Esophagus muscularis mucosa (tissue), 4 donors: ENCODE measurements at regions of chr12 and their contacts with region 1.

Region 1: DNA sequence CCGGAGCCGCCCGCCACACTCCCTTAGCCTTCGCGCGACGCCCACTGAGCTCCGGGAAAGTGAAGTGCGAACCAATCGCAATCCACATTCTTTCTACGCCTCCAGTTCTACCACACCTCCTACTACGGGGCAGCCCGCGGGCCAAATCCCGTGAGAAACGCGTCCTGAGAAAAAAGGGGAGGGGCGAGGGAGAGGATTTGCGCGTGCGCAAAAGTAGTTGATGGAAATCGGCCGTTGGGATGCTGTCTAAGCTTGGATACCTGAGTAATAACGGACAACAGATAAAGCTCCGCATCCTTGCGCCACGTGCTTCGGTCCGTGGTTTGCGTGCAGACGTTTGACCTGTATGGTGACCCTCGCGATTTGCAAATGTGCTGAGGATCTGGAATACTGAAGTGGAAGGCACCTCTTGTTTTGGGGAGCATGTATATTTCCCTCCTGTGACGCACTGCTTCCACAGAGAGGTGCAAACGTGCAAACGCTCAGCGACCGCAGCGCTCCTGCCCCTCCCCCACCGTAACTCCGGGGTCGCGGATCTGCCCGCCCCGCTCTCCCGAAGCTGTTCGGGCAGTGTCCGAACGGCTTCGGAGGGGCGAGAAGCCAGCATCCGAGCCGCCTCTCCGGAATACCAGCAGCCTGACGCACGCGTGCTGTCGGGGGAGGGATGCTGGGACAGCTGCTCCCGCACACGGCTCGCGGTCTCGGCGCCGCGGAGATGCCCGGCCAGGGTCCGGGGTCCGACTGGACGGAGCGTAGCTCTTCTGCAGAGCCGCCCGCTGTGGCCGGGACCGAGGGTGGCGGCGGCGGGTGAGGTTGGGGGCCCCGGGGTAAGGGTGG is at the starts of genes FAM216A and GPN3:
- DNase-seq: peak; percentile 99
- H3K4me3 ChIP-seq: peak within 1 kb of the TSS; percentile 77 to 91 (median 82)
- H3K27ac ChIP-seq: peak within 1 kb of the TSS; percentile 94 to 100 (median 96)
- H3K4me1 ChIP-seq: peaks cover 16 to 36% (median 28%) of the 10 kb centered on the region in 4 donors
- H3K27me3 ChIP-seq: no peaks in the 10 kb centered on the region
- CTCF ChIP-seq: peak in 1 of 3 experiments; percentile 42
- EP300 ChIP-seq: no peak
- POLR2A ChIP-seq: peak; percentile 56
- total RNA-seq, gene FAM216A: 6.2 to 10.4 (median 8.0) TPM
- total RNA-seq, gene GPN3: 18.5 to 39.0 (median 25.9) TPM

Region 2: GRCh38 chr12:110501752-110502738 is 33.6 kb after region 1 on chr12 and contains the starts of genes RAD9B and VPS29:
- intact Hi-C with region 1: loop called (anchors 2 kb)
- DNase-seq: peak; percentile 99
- H3K4me3 ChIP-seq: peak within 1 kb of the TSS; percentile 87 to 98 (median 93)
- H3K27ac ChIP-seq: peak within 1 kb of the TSS; percentile 92 to 97 (median 96)
- H3K4me1 ChIP-seq: peaks cover 35 to 46% (median 45%) of the 10 kb centered on the region in 4 donors
- H3K27me3 ChIP-seq: no peaks in the 10 kb centered on the region
- CTCF ChIP-seq: peak in 1 of 3 experiments; percentile 18
- EP300 ChIP-seq: no peak
- POLR2A ChIP-seq: peak; percentile 89
- total RNA-seq, gene RAD9B: 0.98 to 5.0 (median 2.0) TPM
- total RNA-seq, gene VPS29: 126 to 166 (median 156) TPM

Region 3: GRCh38 chr12:110677206-110677911 is 208.9 kb after region 1 on chr12:
- intact Hi-C with region 1: no loop called
- DNase-seq: no peak
- H3K4me3 ChIP-seq: no peak overlapping the region
- H3K27ac ChIP-seq: peak overlapping the region in 2 of 4 donors; percentile 0 to 11
- H3K4me1 ChIP-seq: peaks cover 5 to 12% (median 9%) of the 10 kb centered on the region in 4 donors
- H3K27me3 ChIP-seq: no peaks in the 10 kb centered on the region
- CTCF ChIP-seq: no peak
- EP300 ChIP-seq: no peak
- POLR2A ChIP-seq: no peak